ENCODE measurements at regions of chr7 and their contacts with region 1.

Region 1: DNA sequence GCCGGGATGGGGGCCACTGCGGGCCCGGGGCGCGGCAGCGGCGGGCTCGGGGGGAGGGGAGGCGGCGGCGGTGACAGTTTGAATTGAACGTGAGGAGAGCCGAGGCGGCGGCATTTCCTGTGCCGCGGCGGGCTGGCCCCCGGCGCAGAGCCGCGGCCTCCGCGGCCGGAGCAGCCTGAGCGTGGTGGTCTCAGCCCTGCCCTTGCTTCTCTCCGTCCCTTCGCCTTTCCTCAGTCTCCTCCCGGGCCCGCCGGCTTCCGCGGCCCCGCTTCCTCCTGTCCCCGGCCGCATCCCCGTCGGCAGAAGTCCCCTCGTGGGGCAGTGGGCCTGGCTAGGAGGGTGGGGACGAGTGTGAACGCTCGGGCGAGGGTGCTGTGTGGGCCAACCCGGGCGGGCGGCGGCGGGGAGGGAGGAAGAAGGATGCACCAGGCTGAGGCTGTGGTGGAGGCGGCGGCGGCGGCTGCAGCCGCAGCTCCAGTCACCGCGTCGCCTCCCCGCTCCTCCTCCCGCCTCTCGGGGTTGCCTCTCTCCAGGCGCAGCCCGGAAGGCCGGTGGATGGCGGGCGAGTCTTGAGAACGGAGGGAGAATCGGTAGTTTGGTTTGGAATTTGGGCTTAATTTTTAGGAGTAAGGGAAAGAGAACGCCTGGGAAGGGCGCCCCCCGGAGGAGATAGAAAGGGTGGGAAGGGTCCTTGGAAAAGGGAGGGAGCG is 690 bp downstream of the SEPTIN7 start:
- DNase-seq: peak; percentile 65
- ATAC-seq: peak; percentile 24
- H3K4me3 ChIP-seq: peak overlapping the region; percentile 92
- H3K27ac ChIP-seq: peak overlapping the region; percentile 97
- H3K4me1 ChIP-seq: peaks cover 2% of the 10 kb centered on the region; the same call in 1 of the 2 replicates
- H3K27me3 ChIP-seq: no peaks in the 10 kb centered on the region
- CTCF ChIP-seq: peak; percentile 62
- POLR2A ChIP-seq: no peak
- RAD21 ChIP-seq: peak; percentile 44; the same call in 1 of the 2 replicates

Region 2: GRCh38 chr7:35647171-35647574 is 154.4 kb before region 1 on chr7:
- CTCF ChIA-PET with region 1: no interaction called
- POLR2A ChIA-PET with region 1: no interaction called
- dilution Hi-C with region 1: no loop called
- in situ Hi-C with region 1: no loop called
- intact Hi-C with region 1: loop called (anchors 5 kb)
- DNase-seq: peak; percentile 36
- ATAC-seq: peak; percentile 69
- H3K4me3 ChIP-seq: no peak overlapping the region
- H3K27ac ChIP-seq: no peak overlapping the region
- H3K4me1 ChIP-seq: peaks cover 3% of the 10 kb centered on the region; the same call in 1 of the 2 replicates
- H3K27me3 ChIP-seq: no peaks in the 10 kb centered on the region
- CTCF ChIP-seq: no peak
- POLR2A ChIP-seq: no peak
- RAD21 ChIP-seq: no peak

Region 3: GRCh38 chr7:35761871-35762677 is 39.5 kb before region 1 on chr7:
- CTCF ChIA-PET with region 1: no interaction called
- POLR2A ChIA-PET with region 1: no interaction called
- dilution Hi-C with region 1: no loop called
- in situ Hi-C with region 1: loop called (anchors 5 kb)
- intact Hi-C with region 1: loop called (anchors 2 kb)
- DNase-seq: peak; percentile 82
- ATAC-seq: peak; percentile 75
- H3K4me3 ChIP-seq: no peak overlapping the region
- H3K27ac ChIP-seq: peak overlapping the region; percentile 92; the same call in 1 of the 2 replicates
- H3K4me1 ChIP-seq: peaks cover 20% of the 10 kb centered on the region
- H3K27me3 ChIP-seq: no peaks in the 10 kb centered on the region
- CTCF ChIP-seq: no peak
- POLR2A ChIP-seq: no peak
- RAD21 ChIP-seq: no peak

Region 4: DNA sequence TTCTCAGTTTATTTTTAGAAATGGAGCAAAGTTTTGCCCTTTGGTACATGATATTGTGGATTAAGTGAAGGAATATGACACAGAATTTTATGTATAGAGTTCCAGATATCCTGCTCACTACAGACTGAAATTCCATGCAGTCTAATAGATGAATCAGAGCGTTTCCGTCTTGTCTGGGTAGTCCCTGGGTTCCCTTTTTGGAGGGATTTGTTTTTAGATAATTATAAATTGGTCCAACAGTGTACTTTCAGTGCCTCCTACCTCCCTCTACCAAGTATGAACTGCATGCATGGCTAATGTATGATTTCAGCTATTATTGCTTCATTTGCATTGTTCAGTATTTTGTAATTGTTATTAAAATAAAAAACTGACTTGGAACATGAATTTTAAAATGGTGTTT is 73.7 kb after region 1 on chr7:
- CTCF ChIA-PET with region 1: no interaction called
- POLR2A ChIA-PET with region 1: no interaction called
- dilution Hi-C with region 1: no loop called
- in situ Hi-C with region 1: no loop called
- intact Hi-C with region 1: loop called (anchors 5 kb)
- DNase-seq: peak; percentile 54
- ATAC-seq: peak; percentile 57; the same call in 1 of the 2 replicates
- H3K4me3 ChIP-seq: no peak overlapping the region
- H3K27ac ChIP-seq: no peak overlapping the region
- H3K4me1 ChIP-seq: peaks cover 8% of the 10 kb centered on the region
- H3K27me3 ChIP-seq: no peaks in the 10 kb centered on the region
- CTCF ChIP-seq: no peak
- POLR2A ChIP-seq: no peak
- RAD21 ChIP-seq: no peak

Region 5: GRCh38 chr7:35985126-35985754 is 183.7 kb after region 1 on chr7:
- CTCF ChIA-PET with region 1: no interaction called
- POLR2A ChIA-PET with region 1: no interaction called
- dilution Hi-C with region 1: no loop called
- in situ Hi-C with region 1: no loop called
- intact Hi-C with region 1: no loop called
- DNase-seq: peak; percentile 70
- ATAC-seq: peak; percentile 99
- H3K4me3 ChIP-seq: no peak overlapping the region
- H3K27ac ChIP-seq: no peak overlapping the region
- H3K4me1 ChIP-seq: peaks cover 2% of the 10 kb centered on the region; the same call in 1 of the 2 replicates
- H3K27me3 ChIP-seq: peaks cover 11% of the 10 kb centered on the region
- CTCF ChIP-seq: peak; percentile 96
- POLR2A ChIP-seq: peak; percentile 60; the same call in 1 of the 2 replicates
- RAD21 ChIP-seq: peak; percentile 100